Heart left ventricle (tissue), 16 donors: ENCODE measurements at regions of chr7 and their contacts with region 1.

Region 1: DNA sequence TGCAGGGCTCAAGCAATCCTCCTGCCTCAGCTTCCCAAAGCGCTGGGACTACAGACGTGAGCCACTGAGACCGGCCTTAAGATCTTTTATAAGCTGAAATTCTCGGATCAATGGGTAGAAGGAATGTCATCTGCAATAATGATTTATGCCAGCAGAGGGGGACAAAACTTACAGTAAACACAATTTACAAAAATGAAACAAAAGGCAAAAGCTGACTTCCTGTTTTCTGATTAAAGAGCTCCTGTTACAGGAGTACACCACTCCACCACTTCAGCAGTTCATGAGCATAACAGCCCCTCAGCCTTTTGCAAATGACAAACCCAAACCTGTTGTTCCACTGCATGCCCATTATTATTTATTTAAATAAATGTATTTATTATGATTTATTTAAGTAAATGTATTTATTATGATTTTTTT is 88.5 kb upstream of the ATP6V0A4 start:
- DNase-seq: peak in 1 of 5 donors; percentile 26
- ATAC-seq: peak in 2 of 4 donors; percentile 28 to 47
- H3K4me3 ChIP-seq: no peak overlapping the region
- H3K27ac ChIP-seq: no peak overlapping the region
- H3K4me1 ChIP-seq: peaks cover 0 to 10% (median under 1%) of the 10 kb centered on the region in 12 donors
- H3K27me3 ChIP-seq: no peaks in the 10 kb centered on the region
- CTCF ChIP-seq: peak; percentile 56 to 74 (median 64)
- POLR2A ChIP-seq: no peak

Region 2: DNA sequence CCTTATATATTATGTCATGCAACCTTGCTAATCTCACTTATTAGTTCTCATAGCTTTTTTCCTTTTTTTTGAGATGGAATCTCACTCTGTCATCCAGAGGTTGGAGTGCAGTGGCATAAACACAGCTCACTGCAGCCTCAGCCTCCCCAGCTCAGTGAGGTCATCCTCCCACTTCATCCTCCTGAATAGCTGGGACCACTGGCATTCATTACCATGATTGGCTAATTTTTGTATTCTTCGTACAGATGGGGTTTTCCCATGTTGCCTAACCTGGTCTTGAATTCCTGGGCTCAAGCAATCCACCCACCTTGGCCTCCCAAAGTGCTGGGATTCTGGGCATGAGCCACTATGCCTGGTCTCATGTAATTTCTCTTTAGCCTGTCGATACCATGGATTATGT is 515.6 kb before region 1 on chr7:
- intact Hi-C with region 1: no loop called
- DNase-seq: no peak
- ATAC-seq: no peak
- H3K4me3 ChIP-seq: no peak overlapping the region
- H3K27ac ChIP-seq: no peak overlapping the region
- H3K4me1 ChIP-seq: no peaks in the 10 kb centered on the region
- H3K27me3 ChIP-seq: no peaks in the 10 kb centered on the region
- CTCF ChIP-seq: no peak
- POLR2A ChIP-seq: no peak

Region 3: DNA sequence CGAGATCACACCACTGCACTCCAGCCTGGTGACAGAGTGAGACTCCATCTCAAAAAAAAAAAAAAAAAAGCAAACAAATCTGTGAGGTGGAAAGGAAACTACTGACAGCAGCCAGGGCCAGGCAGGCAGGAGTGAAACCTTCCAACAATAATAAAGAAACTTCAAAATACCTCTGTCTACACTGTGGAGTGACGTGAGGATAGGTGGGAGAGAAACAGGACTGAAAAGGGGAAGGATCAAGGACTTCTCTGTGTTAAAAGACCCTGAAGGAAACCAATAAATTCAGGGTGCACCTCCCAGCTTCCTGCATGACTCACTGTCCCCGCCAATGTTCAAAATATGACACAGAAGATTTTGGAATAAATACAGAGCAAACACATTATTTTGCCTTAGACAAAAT is 11.7 kb after region 1 on chr7:
- intact Hi-C with region 1: loop called in 1 of 10 experiments (anchors 1 kb)
- DNase-seq: no peak
- ATAC-seq: no peak
- H3K4me3 ChIP-seq: no peak overlapping the region
- H3K27ac ChIP-seq: no peak overlapping the region
- H3K4me1 ChIP-seq: no peaks in the 10 kb centered on the region
- H3K27me3 ChIP-seq: no peaks in the 10 kb centered on the region
- CTCF ChIP-seq: no peak
- POLR2A ChIP-seq: no peak

Region 4: DNA sequence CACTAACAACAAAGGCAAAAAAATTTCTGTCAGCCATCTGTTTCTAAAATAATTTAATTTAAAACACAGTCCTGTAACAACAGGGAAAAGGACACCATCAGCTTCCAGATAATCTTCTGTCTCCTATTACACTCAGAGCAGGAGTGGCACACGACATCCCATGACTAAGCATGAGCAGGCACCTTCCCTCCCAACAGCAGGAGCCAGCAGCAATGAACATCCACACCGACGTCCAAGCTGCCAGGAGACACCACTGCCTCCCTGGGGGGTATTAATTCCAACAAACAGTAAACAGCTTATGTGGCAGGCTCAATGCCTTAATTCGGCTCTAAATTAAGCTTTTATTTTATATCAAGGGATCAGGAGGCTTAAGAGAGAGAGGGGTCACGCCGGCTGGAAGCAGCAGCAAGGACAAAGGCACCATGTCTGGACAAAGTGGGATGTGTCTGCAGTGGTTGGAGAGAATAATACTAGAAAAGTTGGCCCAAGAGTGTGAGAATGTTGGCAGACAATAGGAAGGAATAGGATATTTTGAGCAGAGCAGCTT is 49.0 kb after region 1 on chr7:
- intact Hi-C with region 1: loop called in 1 of 10 experiments (anchors 5 kb)
- DNase-seq: peak in 1 of 5 donors; percentile 38
- ATAC-seq: peak; percentile 58 to 89 (median 76)
- H3K4me3 ChIP-seq: no peak overlapping the region
- H3K27ac ChIP-seq: peak overlapping the region in 7 of 12 donors; percentile 6 to 50 (median 26)
- H3K4me1 ChIP-seq: peaks cover 0 to 18% (median 11%) of the 10 kb centered on the region in 12 donors
- H3K27me3 ChIP-seq: no peaks in the 10 kb centered on the region
- CTCF ChIP-seq: no peak
- POLR2A ChIP-seq: no peak

Region 5: GRCh38 chr7:138948108-138948802 is 61.7 kb after region 1 on chr7:
- intact Hi-C with region 1: no loop called
- DNase-seq: no peak
- ATAC-seq: no peak
- H3K4me3 ChIP-seq: no peak overlapping the region
- H3K27ac ChIP-seq: no peak overlapping the region
- H3K4me1 ChIP-seq: no peaks in the 10 kb centered on the region
- H3K27me3 ChIP-seq: peaks cover 0 to 2% (median 0%) of the 10 kb centered on the region in 9 donors
- CTCF ChIP-seq: no peak
- POLR2A ChIP-seq: no peak

Region 6: DNA sequence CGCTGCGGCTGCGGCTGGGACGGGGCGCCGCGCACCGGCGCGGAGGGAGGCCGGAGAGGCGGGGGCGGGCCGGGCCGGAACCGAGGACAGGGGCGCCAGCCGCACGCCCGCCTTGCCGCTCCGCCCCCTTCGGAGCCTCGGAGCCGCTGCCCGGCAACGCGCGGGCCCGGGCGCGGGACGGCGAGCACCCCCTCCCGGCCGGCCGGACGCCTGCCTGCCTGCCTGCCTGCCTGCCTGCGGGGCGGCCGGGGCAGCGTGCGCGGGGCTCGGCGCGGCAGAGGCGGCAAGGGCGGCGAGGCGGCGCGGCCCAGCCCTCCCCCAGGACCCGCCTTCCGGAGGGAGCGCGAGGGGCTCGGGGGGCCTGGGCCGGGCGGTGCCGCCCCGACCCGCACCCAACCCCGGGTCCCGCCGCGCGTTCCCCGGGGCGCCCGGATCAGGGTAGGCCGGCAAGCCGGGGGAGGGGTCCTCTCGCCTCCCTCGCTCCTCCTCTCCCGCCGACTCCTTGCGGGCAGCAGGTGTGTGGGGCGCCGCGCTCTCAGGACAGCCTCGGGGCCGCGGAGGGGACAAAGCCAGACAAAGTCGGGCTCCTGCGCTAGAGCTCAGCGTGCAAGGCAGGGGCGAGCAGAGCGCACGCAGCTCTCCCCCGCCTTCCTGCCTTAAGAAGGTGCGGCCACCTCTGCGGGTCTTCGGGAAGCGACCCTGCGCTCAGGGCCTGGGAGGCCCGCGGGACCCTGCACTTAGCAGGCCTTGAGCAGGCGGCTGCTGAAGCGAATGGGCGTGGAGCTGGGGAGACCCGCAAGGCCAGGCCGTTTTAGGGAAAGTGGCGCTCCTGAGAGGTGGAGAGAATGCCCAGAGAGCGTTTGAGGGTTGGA is 95.1 kb after region 1 on chr7 and contains the start of gene KIAA1549:
- intact Hi-C with region 1: loop called in 9 of 10 experiments (anchors 2 to 10 kb)
- DNase-seq: peak; percentile 60 to 83 (median 68)
- ATAC-seq: peak; percentile 60 to 96 (median 90)
- H3K4me3 ChIP-seq: peak within 1 kb of the TSS; percentile 50 to 85 (median 68)
- H3K27ac ChIP-seq: peak within 1 kb of the TSS in 4 of 12 donors; percentile 23 to 49 (median 42)
- H3K4me1 ChIP-seq: peaks cover 0 to 21% (median 11%) of the 10 kb centered on the region in 12 donors
- H3K27me3 ChIP-seq: peaks cover 0 to 19% (median 0%) of the 10 kb centered on the region in 9 donors
- CTCF ChIP-seq: peak in 4 of 12 donors; percentile 10 to 35 (median 30)
- POLR2A ChIP-seq: no peak
- total RNA-seq, gene KIAA1549: 1.3 to 4.8 (median 2.1) TPM

Region 7: GRCh38 chr7:138992052-138992531 is 105.6 kb after region 1 on chr7:
- intact Hi-C with region 1: no loop called
- DNase-seq: no peak
- ATAC-seq: peak in 2 of 4 donors; percentile 33 to 72
- H3K4me3 ChIP-seq: no peak overlapping the region
- H3K27ac ChIP-seq: no peak overlapping the region
- H3K4me1 ChIP-seq: no peaks in the 10 kb centered on the region
- H3K27me3 ChIP-seq: no peaks in the 10 kb centered on the region
- CTCF ChIP-seq: no peak
- POLR2A ChIP-seq: no peak

Region 8: GRCh38 chr7:139023076-139023475 is 136.6 kb after region 1 on chr7:
- intact Hi-C with region 1: no loop called
- DNase-seq: no peak
- ATAC-seq: no peak
- H3K4me3 ChIP-seq: no peak overlapping the region
- H3K27ac ChIP-seq: no peak overlapping the region
- H3K4me1 ChIP-seq: no peaks in the 10 kb centered on the region
- H3K27me3 ChIP-seq: no peaks in the 10 kb centered on the region
- CTCF ChIP-seq: no peak
- POLR2A ChIP-seq: no peak

Region 9: GRCh38 chr7:139075031-139075652 is 188.6 kb after region 1 on chr7:
- intact Hi-C with region 1: loop called in 9 of 10 experiments (anchors 2 to 10 kb)
- DNase-seq: peak in 4 of 5 donors; percentile 70 to 77 (median 72)
- ATAC-seq: peak; percentile 73 to 91 (median 90)
- H3K4me3 ChIP-seq: no peak overlapping the region
- H3K27ac ChIP-seq: peak overlapping the region in 6 of 12 donors; percentile 23 to 62 (median 40)
- H3K4me1 ChIP-seq: peaks cover 0 to 32% (median 5%) of the 10 kb centered on the region in 12 donors
- H3K27me3 ChIP-seq: no peaks in the 10 kb centered on the region
- CTCF ChIP-seq: peak; percentile 71 to 91 (median 86)
- POLR2A ChIP-seq: no peak